ENCODE measurements at regions of chr6 and their contacts with region 1.

Region 1: DNA sequence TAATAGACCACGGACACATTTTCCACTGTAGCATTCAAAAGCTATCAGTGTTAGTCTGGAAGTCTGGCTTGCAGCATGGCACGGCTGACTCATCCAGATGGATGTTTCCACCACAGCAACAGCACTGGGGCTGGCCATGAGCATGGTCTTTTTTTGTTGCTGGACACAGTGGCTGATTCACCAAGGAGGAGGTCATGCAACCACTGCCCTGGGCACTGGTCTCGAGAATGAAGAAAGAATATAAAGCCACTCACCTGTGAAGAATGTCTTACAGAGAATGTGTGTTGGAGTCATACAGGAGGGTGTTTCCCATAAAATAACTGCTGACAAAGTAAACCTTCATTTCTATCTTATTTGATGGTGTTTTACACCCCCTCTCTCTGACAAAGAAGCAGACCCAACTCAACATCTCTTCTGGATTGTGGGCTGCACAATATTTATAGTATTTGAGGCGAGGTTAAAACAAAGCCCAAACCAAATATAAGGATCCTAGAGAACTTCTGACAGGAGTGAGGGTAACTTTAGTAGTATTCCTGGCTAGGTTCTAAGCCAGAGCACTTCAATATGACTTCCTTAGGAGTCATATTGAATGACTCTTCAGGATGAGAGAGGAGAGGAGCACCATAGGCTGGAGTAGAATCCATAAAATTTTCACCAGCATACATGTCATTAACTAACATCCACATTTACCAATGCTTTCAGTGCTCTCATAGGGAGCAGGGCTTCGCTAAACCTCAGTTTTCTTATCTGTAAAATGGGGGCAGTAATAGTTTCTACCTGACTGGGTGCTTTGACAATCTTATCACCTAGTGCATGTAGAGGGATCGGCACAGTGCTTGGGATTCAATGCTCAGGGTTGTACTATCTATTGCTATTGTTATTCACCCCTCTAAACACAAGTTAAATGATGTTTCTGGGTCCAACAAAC is 121.4 kb downstream of the KIF13A start:
- DNase-seq: peak; percentile 99
- H3K4me3 ChIP-seq: peak overlapping the region in 1 of 3 experiments; percentile 14
- H3K27ac ChIP-seq: peak overlapping the region; percentile 99
- H3K4me1 ChIP-seq: peaks cover 63% of the 10 kb centered on the region
- H3K27me3 ChIP-seq: no peaks in the 10 kb centered on the region
- CTCF ChIP-seq: no peak

Region 2: DNA sequence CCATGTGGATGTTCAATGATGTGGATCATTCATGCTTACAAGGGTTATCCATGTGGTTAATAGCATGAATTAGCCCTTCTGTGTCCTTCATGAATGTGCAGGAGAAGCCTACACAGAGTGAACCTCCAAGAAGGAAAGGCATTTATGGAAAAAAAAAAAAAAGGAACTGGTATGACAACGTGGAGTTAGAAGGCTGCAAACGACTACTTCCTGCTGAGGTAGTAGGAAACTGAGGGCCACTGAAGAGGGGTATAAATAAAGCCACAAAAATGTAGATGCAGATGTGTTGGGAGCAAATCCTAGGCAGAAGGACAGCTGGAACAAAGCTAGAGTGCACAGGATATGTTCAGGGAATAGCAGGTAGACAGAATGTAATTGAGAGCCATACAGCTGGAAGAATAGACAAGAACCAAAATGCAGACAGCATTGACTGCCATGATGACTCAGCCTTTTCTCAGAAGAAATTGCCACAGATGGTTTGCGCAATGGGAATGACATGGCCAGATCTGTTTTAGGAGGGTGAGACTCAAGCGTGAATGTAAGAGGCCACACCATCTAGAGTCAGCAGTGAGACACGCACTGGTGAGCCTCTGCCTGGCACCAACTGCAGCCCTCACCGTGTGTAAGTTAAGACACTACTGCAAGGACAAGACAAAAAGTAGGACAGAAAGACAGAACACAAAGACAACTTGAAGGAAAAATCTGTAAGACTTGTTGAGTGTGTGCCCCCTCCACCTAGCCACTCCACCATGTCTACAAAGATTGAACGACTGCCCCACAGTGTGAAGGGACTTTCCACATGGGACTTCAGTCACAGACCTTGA is 41.6 kb after region 1 on chr6:
- CTCF ChIA-PET with region 1: no interaction called
- dilution Hi-C with region 1: no loop called
- in situ Hi-C with region 1: no loop called
- intact Hi-C with region 1: loop called (anchors 1 kb)
- DNase-seq: peak; percentile 98
- H3K4me3 ChIP-seq: no peak overlapping the region
- H3K27ac ChIP-seq: peak overlapping the region; percentile 85
- H3K4me1 ChIP-seq: peaks cover 27% of the 10 kb centered on the region
- H3K27me3 ChIP-seq: no peaks in the 10 kb centered on the region
- CTCF ChIP-seq: peak; percentile 35 to 54

Region 3: GRCh38 chr6:18016133-18016532 is 150.1 kb after region 1 on chr6:
- CTCF ChIA-PET with region 1: no interaction called
- dilution Hi-C with region 1: no loop called
- in situ Hi-C with region 1: no loop called
- intact Hi-C with region 1: loop called (anchors 1 kb)
- DNase-seq: peak; percentile 89
- H3K4me3 ChIP-seq: no peak overlapping the region
- H3K27ac ChIP-seq: peak overlapping the region; percentile 100
- H3K4me1 ChIP-seq: peaks cover 36% of the 10 kb centered on the region
- H3K27me3 ChIP-seq: no peaks in the 10 kb centered on the region
- CTCF ChIP-seq: no peak

Region 4: GRCh38 chr6:18155150-18155863 is 289.2 kb after region 1 on chr6 and contains the start of gene KDM1B:
- CTCF ChIA-PET with region 1: no interaction called
- dilution Hi-C with region 1: no loop called
- in situ Hi-C with region 1: no loop called
- intact Hi-C with region 1: loop called (anchors 1 kb)
- DNase-seq: peak; percentile 98
- H3K4me3 ChIP-seq: peak within 1 kb of the TSS; percentile 97 to 99 (median 98)
- H3K27ac ChIP-seq: peak within 1 kb of the TSS; percentile 98
- H3K4me1 ChIP-seq: peaks cover 16% of the 10 kb centered on the region
- H3K27me3 ChIP-seq: no peaks in the 10 kb centered on the region
- CTCF ChIP-seq: no peak
- total RNA-seq, gene KDM1B: 19.5 to 25.1 TPM

Region 5: DNA sequence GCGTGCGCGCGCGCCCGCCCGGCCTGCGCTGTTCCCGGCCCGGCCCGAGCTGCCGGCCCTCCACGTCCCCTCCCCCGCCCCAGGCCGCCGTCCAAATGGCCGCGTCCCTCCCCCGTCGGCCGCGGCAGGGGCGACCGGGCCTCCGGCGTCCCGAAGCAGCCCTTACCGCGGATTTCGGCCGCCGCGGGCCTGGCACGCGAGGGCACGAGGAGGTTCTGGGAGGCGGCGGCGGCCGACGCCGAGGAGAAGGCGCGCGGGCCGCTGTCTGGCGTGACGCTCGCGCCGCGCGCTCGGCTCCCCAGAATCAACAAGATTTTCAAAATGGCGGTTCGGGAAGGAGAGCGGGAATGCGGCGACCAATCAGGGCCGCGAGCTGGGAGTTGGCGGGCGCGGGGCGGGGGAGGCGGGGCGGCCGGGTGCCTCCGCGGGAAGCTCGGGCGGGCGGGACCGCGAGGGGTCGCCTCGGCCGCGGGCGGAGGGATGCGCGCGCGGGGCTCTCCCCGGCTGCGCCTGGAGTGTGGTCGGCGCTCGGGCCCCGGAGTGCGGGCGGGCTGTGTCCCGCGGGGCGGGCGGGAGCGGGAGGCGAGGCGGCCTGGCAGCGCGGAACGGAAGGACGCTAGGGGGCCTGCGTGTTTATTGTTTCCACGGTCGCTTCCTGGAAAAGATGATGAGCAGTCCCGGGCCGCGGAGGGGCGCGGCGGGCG is 398.3 kb after region 1 on chr6 and contains the start of gene DEK:
- CTCF ChIA-PET with region 1: no interaction called
- dilution Hi-C with region 1: no loop called
- in situ Hi-C with region 1: no loop called
- intact Hi-C with region 1: loop called (anchors 10 kb)
- DNase-seq: peak; percentile 74
- H3K4me3 ChIP-seq: peak within 1 kb of the TSS; percentile 72 to 91 (median 82)
- H3K27ac ChIP-seq: peak within 1 kb of the TSS; percentile 77
- H3K4me1 ChIP-seq: peaks cover 41% of the 10 kb centered on the region
- H3K27me3 ChIP-seq: no peaks in the 10 kb centered on the region
- CTCF ChIP-seq: peak; percentile 19 to 61
- total RNA-seq, gene DEK: 34.5 to 103 TPM

Measured in mammary epithelial cell (primary cell).